B cell (primary cell): ENCODE measurements at regions of chr10 and their contacts with region 1.

Region 1: DNA sequence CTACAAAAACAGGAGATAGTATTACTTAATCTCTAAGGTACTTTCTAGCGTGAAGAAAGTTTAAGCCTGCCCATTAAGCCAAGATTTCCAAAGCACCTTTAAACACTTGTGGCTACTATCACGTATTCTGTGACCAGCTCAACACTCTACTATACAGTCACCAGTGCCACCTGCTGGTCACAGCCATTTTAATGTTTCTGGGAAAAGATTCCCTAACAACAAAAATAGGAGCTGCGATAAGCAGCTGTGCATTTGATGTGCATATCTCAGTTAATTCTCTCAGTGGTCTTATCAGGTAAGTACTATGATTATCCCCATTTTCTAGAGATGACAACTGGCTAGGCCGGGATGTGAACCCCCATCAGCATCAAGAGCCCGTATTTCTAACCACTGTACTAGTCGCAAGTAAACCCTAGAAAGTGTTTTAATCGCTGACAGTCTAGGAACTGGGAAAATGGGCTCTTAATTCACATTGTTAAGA is 860 bp downstream of the SEC31B start:
- DNase-seq: peak; percentile 64
- ATAC-seq: peak; percentile 41
- H3K4me3 ChIP-seq: no peak overlapping the region
- H3K4me3 Mint-ChIP-seq: peak overlapping the region; percentile 66
- H3K27ac ChIP-seq: no peak overlapping the region
- H3K27ac Mint-ChIP-seq: no peak overlapping the region
- H3K4me1 ChIP-seq: peaks cover 13% of the 10 kb centered on the region in 2 donors
- H3K4me1 Mint-ChIP-seq: peaks cover 10% of the 10 kb centered on the region
- H3K27me3 ChIP-seq: peaks cover 0 to 10% (median 5%) of the 10 kb centered on the region in 4 experiments
- H3K27me3 Mint-ChIP-seq: peaks cover 9% of the 10 kb centered on the region
- CTCF ChIP-seq: peak; percentile 84

Region 2: GRCh38 chr10:100303724-100304319 is 215.0 kb before region 1 on chr10:
- CTCF ChIA-PET with region 1: interaction called, 14 read pairs
- POLR2A ChIA-PET with region 1: no interaction called
- intact Hi-C with region 1: no loop called
- DNase-seq: peak; percentile 42
- ATAC-seq: no peak
- H3K4me3 ChIP-seq: no peak overlapping the region
- H3K4me3 Mint-ChIP-seq: no peak overlapping the region
- H3K27ac ChIP-seq: no peak overlapping the region
- H3K27ac Mint-ChIP-seq: no peak overlapping the region
- H3K4me1 ChIP-seq: peaks cover 0 to 3% of the 10 kb centered on the region in 2 donors
- H3K4me1 Mint-ChIP-seq: no peaks in the 10 kb centered on the region
- H3K27me3 ChIP-seq: peaks cover 0 to 5% (median 0%) of the 10 kb centered on the region in 4 experiments
- H3K27me3 Mint-ChIP-seq: peaks cover 47% of the 10 kb centered on the region
- CTCF ChIP-seq: peak; percentile 70

Region 3: DNA sequence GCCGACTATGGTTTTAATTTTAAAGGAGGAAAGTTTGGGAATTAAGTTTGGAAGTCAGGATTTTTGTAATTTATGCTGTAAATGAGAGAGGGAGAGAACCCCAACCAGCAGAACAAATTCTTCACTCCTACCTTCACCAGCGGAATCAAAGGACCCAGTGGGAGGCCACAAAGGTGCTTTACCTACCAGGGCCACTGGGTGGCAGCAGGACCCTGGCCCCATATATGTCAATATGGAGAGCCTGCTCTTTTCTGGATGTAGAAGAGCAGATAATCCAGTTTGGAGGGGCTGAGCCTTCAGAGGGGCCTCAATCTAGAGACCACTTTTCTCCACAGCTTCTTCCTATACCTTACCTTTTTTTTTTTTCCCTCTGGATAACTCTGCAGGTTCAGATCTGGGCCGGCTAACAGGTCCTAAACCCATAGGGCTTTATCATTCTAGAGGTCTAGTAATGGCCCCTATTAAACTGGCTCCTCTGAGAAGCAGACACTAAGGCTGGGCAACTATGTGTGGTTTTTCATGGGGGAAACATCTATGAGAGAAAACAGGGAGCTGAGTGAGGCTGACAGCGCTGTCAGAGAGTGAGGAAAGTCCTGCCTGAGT is 180.3 kb before region 1 on chr10:
- CTCF ChIA-PET with region 1: interaction called, 29 read pairs
- POLR2A ChIA-PET with region 1: no interaction called
- intact Hi-C with region 1: loop called (anchors 1 kb)
- DNase-seq: peak; percentile 83
- ATAC-seq: peak; percentile 78
- H3K4me3 ChIP-seq: peak overlapping the region in 1 of 5 experiments; percentile 19
- H3K4me3 Mint-ChIP-seq: peak overlapping the region; percentile 72
- H3K27ac ChIP-seq: peak overlapping the region; percentile 38 to 49
- H3K27ac Mint-ChIP-seq: peak overlapping the region; percentile 67
- H3K4me1 ChIP-seq: peaks cover 20 to 24% of the 10 kb centered on the region in 2 donors
- H3K4me1 Mint-ChIP-seq: peaks cover 26% of the 10 kb centered on the region
- H3K27me3 ChIP-seq: peaks cover 0 to 6% (median 0%) of the 10 kb centered on the region in 4 experiments
- H3K27me3 Mint-ChIP-seq: peaks cover 11% of the 10 kb centered on the region
- CTCF ChIP-seq: peak; percentile 96

Region 4: GRCh38 chr10:100481462-100482081 is 37.2 kb before region 1 on chr10:
- CTCF ChIA-PET with region 1: interaction called, 8 read pairs
- POLR2A ChIA-PET with region 1: no interaction called
- intact Hi-C with region 1: loop called (anchors 5 kb)
- DNase-seq: peak; percentile 95
- ATAC-seq: peak; percentile 99
- H3K4me3 ChIP-seq: peak overlapping the region; percentile 57 to 81 (median 64)
- H3K4me3 Mint-ChIP-seq: peak overlapping the region; percentile 85
- H3K27ac ChIP-seq: no peak overlapping the region
- H3K27ac Mint-ChIP-seq: no peak overlapping the region
- H3K4me1 ChIP-seq: peaks cover 7 to 20% of the 10 kb centered on the region in 2 donors
- H3K4me1 Mint-ChIP-seq: peaks cover 14% of the 10 kb centered on the region
- H3K27me3 ChIP-seq: peaks cover 0 to 32% (median 20%) of the 10 kb centered on the region in 4 experiments
- H3K27me3 Mint-ChIP-seq: peaks cover 31% of the 10 kb centered on the region
- CTCF ChIP-seq: no peak

Region 5: DNA sequence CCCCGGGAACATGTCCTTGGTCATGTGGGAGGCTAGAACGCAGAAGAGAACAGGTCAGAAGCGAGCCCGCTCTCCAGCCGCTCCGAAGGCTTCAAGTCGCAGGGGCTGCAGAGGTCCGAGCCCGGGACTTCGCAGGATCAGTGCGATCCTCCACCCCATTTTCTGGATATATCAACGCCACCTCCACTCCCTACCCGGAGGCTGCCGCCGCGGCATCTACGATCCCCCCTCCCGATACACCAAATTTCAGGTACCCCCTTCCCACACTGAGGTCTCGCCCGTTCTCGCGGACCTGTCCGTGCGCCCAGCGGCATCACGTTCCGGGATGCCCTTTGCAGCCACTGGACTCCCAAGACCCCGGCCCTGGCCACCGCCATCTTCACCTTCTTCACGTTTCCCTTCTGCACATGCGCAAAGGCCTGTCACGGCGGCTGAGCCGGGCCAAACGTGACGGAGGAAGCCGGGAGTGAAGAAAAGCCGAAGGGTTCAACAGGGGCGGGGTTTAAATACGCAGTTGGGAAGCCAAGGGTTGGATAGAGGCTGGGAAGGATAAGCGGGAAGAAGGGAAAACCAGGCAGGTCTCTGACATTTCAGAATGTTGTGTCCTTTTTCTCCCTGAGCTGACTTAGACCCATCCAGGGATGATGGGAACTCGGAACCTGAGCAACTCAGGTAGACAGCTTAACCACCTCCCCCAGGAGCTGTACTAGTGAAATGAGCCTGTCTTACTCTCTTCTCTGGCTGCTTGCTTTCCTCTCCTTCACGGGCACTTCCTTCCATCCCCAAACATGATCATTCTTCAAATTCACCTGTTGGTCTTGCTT is 10.9 kb after region 1 on chr10 and contains the start of gene NDUFB8:
- CTCF ChIA-PET with region 1: interaction called, 15 read pairs
- POLR2A ChIA-PET with region 1: no interaction called
- intact Hi-C with region 1: no loop called
- DNase-seq: peak; percentile 89
- ATAC-seq: peak; percentile 87
- H3K4me3 ChIP-seq: peak within 1 kb of the TSS; percentile 65 to 98 (median 81)
- H3K4me3 Mint-ChIP-seq: peak within 1 kb of the TSS; percentile 100
- H3K27ac ChIP-seq: peak within 1 kb of the TSS; percentile 65 to 83
- H3K27ac Mint-ChIP-seq: peak within 1 kb of the TSS; percentile 98
- H3K4me1 ChIP-seq: peaks cover 16 to 21% of the 10 kb centered on the region in 2 donors
- H3K4me1 Mint-ChIP-seq: peaks cover 33% of the 10 kb centered on the region
- H3K27me3 ChIP-seq: no peaks in the 10 kb centered on the region
- H3K27me3 Mint-ChIP-seq: no peaks in the 10 kb centered on the region
- CTCF ChIP-seq: no peak
- total RNA-seq, gene NDUFB8: 131 and 143 TPM in 2 replicates